ENCODE measurements at regions of chr1 and their contacts with region 1.

Region 1: DNA sequence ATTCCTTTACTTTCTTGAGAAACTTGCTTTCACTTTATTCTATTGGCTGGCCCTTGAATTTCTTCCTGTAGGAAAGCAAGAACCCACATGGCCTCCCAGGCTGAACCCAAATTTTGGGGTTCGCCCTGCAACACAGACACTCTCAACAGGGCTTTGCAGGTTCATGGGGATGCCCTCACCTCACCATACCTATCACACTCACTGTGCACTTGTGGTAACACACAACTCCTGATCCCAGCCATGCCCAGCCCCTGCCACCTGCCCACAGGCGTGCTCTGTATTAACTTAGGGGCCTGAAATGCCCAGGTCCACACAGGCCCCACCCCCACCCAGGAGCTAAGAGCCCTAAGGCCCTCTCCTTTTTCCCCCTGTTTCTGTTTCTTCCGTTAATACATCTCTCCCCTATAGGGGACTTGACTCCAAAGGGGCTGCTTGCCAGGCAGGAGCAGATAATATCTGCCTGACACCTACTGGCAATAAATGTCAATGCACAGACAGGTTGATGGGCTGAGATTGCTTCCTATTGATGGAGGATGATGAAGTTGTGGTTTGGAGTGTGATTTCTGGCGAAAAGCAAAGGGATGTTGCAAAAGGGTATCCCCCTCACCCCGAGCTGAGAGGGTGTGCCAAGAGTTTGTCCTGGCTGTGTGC is 171.5 kb downstream of the AJAP1 start:
- DNase-seq: peak; percentile 12 to 14
- H3K4me3 ChIP-seq: no peak overlapping the region
- H3K27ac ChIP-seq: no peak overlapping the region
- H3K4me1 ChIP-seq: no peaks in the 10 kb centered on the region
- H3K27me3 ChIP-seq: no peaks in the 10 kb centered on the region
- CTCF ChIP-seq: peak in 4 of 6 experiments; percentile 47 to 54 (median 51)
- POLR2A ChIP-seq: no peak

Region 2: DNA sequence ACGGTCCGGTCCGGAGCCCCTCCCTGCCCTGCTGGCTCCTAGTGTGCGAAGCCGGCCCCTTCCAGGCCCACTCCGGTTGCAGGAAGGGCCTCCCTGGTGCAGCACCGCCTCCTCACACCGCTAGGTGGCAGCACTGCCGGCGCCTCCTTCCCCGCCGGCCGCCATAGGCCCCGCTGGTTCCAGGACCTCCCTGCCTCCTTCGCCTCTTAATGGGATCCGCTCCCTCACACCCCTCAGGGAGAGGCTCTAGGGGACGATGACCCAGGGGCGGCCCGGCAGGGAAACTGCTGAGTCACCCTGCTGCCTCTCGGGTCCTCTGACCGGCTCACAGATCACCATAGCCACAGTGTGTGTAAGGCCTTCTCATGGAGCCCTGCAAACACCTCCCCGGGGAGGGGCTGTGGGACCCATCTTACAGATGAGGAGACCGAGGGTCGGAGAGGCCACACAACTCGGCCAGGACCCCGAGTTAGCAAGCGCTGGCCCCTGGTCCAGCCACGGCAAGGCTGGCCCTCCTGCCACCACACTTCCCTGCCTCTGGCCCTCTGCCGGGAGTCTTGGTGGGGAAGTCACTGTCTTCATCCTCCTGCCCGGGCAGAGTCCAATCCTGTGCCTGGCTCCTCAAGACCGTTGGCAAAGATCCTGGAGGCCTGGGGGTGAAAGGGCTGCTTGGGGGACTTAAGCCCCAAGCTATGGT is 173.1 kb before region 1 on chr1:
- intact Hi-C with region 1: loop called (anchors 5 kb)
- DNase-seq: peak; percentile 35 to 52
- H3K4me3 ChIP-seq: no peak overlapping the region
- H3K27ac ChIP-seq: no peak overlapping the region
- H3K4me1 ChIP-seq: peaks cover 7 to 18% of the 10 kb centered on the region in 2 donors
- H3K27me3 ChIP-seq: peaks cover 7% of the 10 kb centered on the region
- CTCF ChIP-seq: peak; percentile 62 to 97 (median 86)
- POLR2A ChIP-seq: no peak

Measured in thyroid gland (tissue), 4 donors.